H1 (cell line): ENCODE measurements at regions of chr19 and their contacts with region 1.

Region 1: DNA sequence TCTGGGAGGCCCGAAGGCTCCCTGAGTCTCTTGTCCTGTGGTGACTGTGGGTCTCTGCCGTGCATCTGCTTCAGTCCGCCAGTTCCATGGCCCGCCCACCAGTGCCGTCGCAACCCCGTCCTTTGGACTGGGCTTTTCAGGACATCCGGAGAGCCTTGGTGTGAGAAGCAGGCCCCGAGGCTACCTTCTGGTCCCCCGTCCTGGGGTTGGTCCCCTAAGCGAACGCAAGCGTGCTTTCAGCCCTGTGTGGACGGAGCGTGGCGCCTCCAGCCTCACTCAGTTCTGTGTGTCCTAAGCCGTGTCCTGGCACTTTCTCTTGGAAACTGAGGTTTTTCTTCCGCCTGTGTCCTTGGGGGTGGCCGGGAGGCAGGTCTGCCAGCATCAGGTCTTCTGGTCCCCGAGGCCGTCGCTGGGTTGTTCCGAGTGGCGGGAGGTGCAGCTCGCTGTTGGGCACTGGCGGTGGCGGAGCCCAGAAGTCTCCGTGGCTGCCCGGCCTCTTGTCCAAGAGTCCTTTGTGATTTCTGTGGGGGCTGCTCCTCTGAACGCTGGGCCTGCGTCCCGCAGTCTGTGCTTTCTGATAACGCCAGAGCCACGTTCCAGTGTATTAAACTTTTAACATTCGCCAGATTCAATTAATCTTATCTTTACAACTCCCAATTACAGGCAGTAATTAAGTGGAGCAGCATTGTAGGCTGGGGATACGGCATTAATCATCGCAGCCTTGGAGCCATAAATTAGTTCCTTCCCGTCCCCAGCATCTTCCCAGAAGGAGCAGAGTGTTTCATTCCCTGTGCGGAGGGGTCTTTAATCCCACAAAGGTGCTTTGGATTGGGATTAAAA is 99.5 kb downstream of the KDM4B start:
- DNase-seq: no peak
- H3K4me3 ChIP-seq: no peak overlapping the region
- H3K27ac ChIP-seq: no peak overlapping the region
- H3K4me1 ChIP-seq: peaks cover under 1 to 12% (median 4%) of the 10 kb centered on the region in 4 experiments; a peak in 5 of 7 replicates
- H3K27me3 ChIP-seq: no peaks in the 10 kb centered on the region
- CTCF ChIP-seq: no peak
- EP300 ChIP-seq: no peak
- POLR2A ChIP-seq: no peak
- RAD21 ChIP-seq: no peak

Region 2: DNA sequence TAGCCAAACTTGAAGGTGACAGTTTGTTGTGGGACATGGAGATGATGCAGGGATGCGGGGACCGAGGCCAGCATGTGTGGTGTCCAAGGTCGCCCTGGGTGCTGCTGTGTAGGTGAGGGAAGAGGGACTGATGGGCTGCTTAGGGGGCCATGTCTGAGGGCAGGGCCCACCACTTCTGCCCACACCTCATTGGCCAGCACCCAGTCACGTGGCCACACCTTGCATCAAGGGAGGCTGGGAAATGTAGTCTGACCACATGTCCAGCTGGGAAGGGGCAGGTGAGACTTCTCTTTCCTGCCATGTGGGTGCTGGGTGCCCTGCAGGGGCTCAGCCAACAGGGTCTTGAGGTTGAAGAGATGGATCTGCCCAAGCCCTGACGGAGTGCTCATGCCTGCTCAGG is 10.6 kb before region 1 on chr19:
- CTCF ChIA-PET with region 1: interaction called, 22 read pairs
- POLR2A ChIA-PET with region 1: interaction called, 3 read pairs
- DNase-seq: no peak
- H3K4me3 ChIP-seq: no peak overlapping the region
- H3K27ac ChIP-seq: no peak overlapping the region
- H3K4me1 ChIP-seq: peaks cover 0 to 9% (median 0%) of the 10 kb centered on the region in 4 experiments; a peak in 3 of 7 replicates
- H3K27me3 ChIP-seq: no peaks in the 10 kb centered on the region
- CTCF ChIP-seq: no peak
- EP300 ChIP-seq: no peak
- POLR2A ChIP-seq: no peak
- RAD21 ChIP-seq: no peak

Region 3: GRCh38 chr19:5170329-5170745 is 101.9 kb after region 1 on chr19:
- CTCF ChIA-PET with region 1: no interaction called
- POLR2A ChIA-PET with region 1: no interaction called
- DNase-seq: peak in 1 of 2 experiments; percentile 95
- H3K4me3 ChIP-seq: no peak overlapping the region
- H3K27ac ChIP-seq: no peak overlapping the region
- H3K4me1 ChIP-seq: no peaks in the 10 kb centered on the region
- H3K27me3 ChIP-seq: peaks cover 0 to 2% (median 0%) of the 10 kb centered on the region in 4 experiments; a peak in 1 of 7 replicates
- CTCF ChIP-seq: peak; percentile 60 to 95 (median 94)
- EP300 ChIP-seq: no peak
- POLR2A ChIP-seq: no peak
- RAD21 ChIP-seq: peak; percentile 47 to 54

Region 4: DNA sequence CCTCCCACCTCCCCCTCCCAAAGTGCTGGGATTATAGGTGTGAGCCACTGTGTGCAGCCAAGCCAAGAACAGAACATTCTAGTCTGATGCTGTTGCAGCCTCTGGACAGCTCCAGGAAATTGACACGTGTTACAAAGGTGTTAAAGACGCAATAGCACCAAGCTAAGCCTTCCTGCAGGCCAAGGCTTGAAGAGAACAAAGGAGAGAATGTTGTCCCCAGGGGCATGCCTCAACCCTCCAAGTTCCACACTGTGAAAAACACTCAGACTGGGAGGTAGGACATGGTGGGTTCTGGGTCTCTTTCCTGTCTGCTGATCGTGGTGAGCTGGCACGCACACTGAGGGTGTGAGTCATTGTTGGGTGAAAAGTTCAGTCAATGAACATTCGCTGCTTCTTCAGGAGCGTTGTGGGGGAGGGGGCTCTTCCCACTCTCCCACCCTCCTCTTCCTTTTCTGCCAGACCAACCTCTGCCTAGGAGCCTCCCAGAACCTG is 277.5 kb after region 1 on chr19:
- CTCF ChIA-PET with region 1: no interaction called
- POLR2A ChIA-PET with region 1: no interaction called
- DNase-seq: no peak
- H3K4me3 ChIP-seq: no peak overlapping the region
- H3K27ac ChIP-seq: no peak overlapping the region
- H3K4me1 ChIP-seq: peaks cover 0 to 1% (median 0%) of the 10 kb centered on the region in 4 experiments; a peak in 3 of 7 replicates
- H3K27me3 ChIP-seq: peaks cover 10 to 21% (median 16%) of the 10 kb centered on the region in 4 experiments
- CTCF ChIP-seq: no peak
- EP300 ChIP-seq: no peak
- POLR2A ChIP-seq: no peak
- RAD21 ChIP-seq: no peak